ENCODE measurements at regions of chr15 and their contacts with region 1.

Region 1: GRCh38 chr15:89820666-89821611 is 6.3 kb upstream of the ANPEP start:
- DNase-seq: peak; percentile 97
- ATAC-seq: peak; percentile 73
- H3K4me3 ChIP-seq: peak overlapping the region; percentile 47
- H3K27ac ChIP-seq: peak overlapping the region; percentile 100
- H3K4me1 ChIP-seq: peaks cover 77% of the 10 kb centered on the region
- H3K27me3 ChIP-seq: no peaks in the 10 kb centered on the region
- CTCF ChIP-seq: no peak

Region 2: GRCh38 chr15:89772932-89773583 is 47.9 kb before region 1 on chr15:
- CTCF ChIA-PET with region 1: no interaction called
- POLR2A ChIA-PET with region 1: interaction called, 3 read pairs
- intact Hi-C with region 1: loop called (anchors 2 kb)
- DNase-seq: peak; percentile 67
- ATAC-seq: peak; percentile 52
- H3K4me3 ChIP-seq: no peak overlapping the region
- H3K27ac ChIP-seq: no peak overlapping the region
- H3K4me1 ChIP-seq: peaks cover 30% of the 10 kb centered on the region
- H3K27me3 ChIP-seq: no peaks in the 10 kb centered on the region
- CTCF ChIP-seq: peak; percentile 48

Measured in PC-3 (cell line).